ENCODE measurements at regions of chr4 and their contacts with region 1.

Region 1: DNA sequence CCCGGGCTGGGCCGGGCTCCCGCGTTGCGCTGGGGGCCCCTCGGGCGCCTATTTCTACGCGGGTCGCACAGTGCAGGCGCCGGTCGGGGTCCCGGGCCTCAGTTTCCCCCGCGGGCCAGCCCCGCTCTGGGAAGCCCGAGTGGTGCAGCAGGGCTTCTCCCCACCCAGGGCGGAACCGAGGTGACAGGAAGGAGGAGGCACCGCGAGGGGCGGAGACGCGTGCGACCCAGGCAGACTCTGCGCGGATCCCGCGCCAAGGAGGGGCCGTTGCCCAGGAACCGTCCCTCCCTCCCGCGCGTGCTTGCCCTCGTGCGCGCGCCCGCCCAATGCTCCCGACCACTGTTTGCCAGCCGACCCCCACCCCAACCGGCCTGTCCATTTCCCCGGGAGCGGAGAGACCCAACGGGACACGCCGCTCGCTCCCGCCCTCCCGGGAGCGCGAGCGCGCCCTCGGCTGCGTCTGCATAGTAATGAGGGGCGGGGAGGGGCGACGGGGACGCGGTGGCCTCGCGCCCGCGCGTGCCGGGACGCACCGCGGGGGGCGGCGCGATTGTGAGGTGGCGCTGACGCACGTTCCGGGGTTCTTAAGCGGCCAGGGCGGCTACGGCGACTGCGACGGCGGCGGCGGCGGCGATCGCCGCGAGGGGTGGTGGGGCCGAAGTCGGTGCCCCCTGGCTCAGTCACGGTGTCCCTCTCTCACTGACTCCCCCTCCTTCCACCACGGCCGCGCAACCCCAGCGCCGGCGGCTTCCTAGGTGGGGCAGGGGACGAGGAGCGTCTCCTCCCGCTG is at the start of gene CPEB2:
- DNase-seq: peak; percentile 89 to 96
- ATAC-seq: peak; percentile 68 to 87 (median 73)
- H3K4me3 ChIP-seq: peak within 1 kb of the TSS; percentile 87
- H3K4me3 Mint-ChIP-seq: peak within 1 kb of the TSS; percentile 90
- H3K27ac ChIP-seq: peak within 1 kb of the TSS; percentile 98
- H3K27ac Mint-ChIP-seq: peak within 1 kb of the TSS; percentile 91 to 96
- H3K4me1 ChIP-seq: peaks cover 2% of the 10 kb centered on the region
- H3K4me1 Mint-ChIP-seq: peaks cover 26 to 30% of the 10 kb centered on the region in 2 donors
- H3K27me3 ChIP-seq: no peaks in the 10 kb centered on the region
- H3K27me3 Mint-ChIP-seq: peaks cover 0 to 3% of the 10 kb centered on the region in 2 donors
- CTCF ChIP-seq: no peak
- total RNA-seq, gene CPEB2: 24.7 to 32.5 (median 29.0) TPM

Region 2: GRCh38 chr4:13627606-13628301 is 1374.3 kb before region 1 on chr4 and contains the start of gene BOD1L1:
- intact Hi-C with region 1: loop called (anchors 2 kb)
- DNase-seq: peak; percentile 73 to 91
- ATAC-seq: peak; percentile 78 to 86 (median 84)
- H3K4me3 ChIP-seq: peak within 1 kb of the TSS; percentile 74
- H3K4me3 Mint-ChIP-seq: peak within 1 kb of the TSS; percentile 98
- H3K27ac ChIP-seq: peak within 1 kb of the TSS; percentile 78
- H3K27ac Mint-ChIP-seq: peak within 1 kb of the TSS; percentile 97
- H3K4me1 ChIP-seq: peaks cover 18% of the 10 kb centered on the region
- H3K4me1 Mint-ChIP-seq: peaks cover 45 to 48% of the 10 kb centered on the region in 2 donors
- H3K27me3 ChIP-seq: no peaks in the 10 kb centered on the region
- H3K27me3 Mint-ChIP-seq: peaks cover 0 to 2% of the 10 kb centered on the region in 2 donors
- CTCF ChIP-seq: peak; percentile 19
- total RNA-seq, gene BOD1L1: 62.2 to 69.1 (median 67.7) TPM

Region 3: GRCh38 chr4:14871676-14872430 is 130.2 kb before region 1 on chr4:
- intact Hi-C with region 1: loop called (anchors 2 kb)
- DNase-seq: peak in 1 of 2 donors; percentile 54
- ATAC-seq: peak in 2 of 3 donors; percentile 46 to 54
- H3K4me3 ChIP-seq: no peak overlapping the region
- H3K4me3 Mint-ChIP-seq: no peak overlapping the region
- H3K27ac ChIP-seq: no peak overlapping the region
- H3K27ac Mint-ChIP-seq: no peak overlapping the region
- H3K4me1 ChIP-seq: peaks cover 19% of the 10 kb centered on the region
- H3K4me1 Mint-ChIP-seq: peaks cover 39 to 43% of the 10 kb centered on the region in 2 donors
- H3K27me3 ChIP-seq: no peaks in the 10 kb centered on the region
- H3K27me3 Mint-ChIP-seq: no peaks in the 10 kb centered on the region
- CTCF ChIP-seq: peak; percentile 35

Region 4: DNA sequence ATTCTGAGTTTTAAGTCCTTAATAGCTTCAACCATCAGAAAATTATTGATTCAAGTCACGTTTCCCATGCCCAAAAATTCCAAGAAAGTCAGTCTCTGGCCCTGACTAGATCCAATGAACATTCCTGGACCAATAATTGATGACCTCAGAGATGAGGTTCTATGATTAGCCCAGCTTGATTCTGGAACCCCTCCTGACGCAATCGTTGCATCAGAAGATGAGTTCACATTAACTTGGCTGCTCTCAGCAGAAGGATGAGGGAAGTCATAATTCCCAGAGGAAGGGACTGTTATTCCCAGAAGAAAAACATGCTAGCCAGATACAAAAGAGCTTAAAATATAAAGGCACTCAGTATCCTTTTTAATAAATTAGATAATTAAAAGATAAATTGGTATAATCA is 34.1 kb before region 1 on chr4:
- intact Hi-C with region 1: no loop called
- DNase-seq: no peak
- ATAC-seq: no peak
- H3K4me3 ChIP-seq: no peak overlapping the region
- H3K4me3 Mint-ChIP-seq: no peak overlapping the region
- H3K27ac ChIP-seq: no peak overlapping the region
- H3K27ac Mint-ChIP-seq: no peak overlapping the region
- H3K4me1 ChIP-seq: no peaks in the 10 kb centered on the region
- H3K4me1 Mint-ChIP-seq: no peaks in the 10 kb centered on the region
- H3K27me3 ChIP-seq: peaks cover 7% of the 10 kb centered on the region
- H3K27me3 Mint-ChIP-seq: peaks cover 13 to 28% of the 10 kb centered on the region in 2 donors
- CTCF ChIP-seq: no peak

Region 5: DNA sequence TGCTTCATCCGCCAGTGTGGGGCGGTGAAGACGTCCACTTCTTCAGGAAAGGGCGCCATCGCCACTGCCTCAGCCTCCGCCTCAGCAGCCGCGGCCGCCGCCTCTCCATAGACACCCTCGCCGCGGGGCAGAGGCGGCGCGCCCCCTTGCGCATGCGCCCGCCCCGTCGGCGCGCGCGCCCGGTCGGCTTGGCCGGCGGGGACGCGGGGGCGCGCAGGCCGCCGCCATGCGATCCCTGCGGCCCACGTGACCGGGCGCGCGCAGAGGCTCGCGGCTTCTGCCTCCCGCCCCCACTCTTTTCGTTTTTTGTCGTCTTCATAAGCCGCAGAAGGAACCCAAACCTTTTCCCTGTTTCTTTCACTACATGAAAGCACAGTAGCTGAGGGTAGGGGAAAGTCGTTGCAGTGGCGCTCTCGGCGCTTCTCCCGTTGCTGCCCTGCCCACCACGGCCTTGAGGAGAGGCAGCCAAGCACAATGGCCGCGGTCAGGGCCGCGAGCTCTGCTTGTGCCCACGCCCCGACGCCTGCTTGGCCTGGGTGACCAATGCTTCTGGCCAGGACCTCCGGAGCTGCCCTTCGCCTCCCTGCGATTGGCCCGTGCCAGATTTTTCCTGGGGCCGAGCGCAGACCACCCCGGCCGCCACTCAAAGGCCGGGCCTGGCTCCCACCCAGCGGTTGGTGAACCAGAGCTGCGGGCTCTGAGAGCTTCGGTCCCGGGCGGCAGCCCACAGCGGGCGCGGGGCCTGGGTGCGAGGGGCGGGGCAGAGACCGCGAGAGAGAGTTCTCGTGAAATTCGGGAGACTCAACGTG is 653.4 kb after region 1 on chr4 and contains the start of gene FBXL5:
- intact Hi-C with region 1: loop called (anchors 2 kb)
- DNase-seq: peak; percentile 86 to 96
- ATAC-seq: peak; percentile 80 to 94 (median 84)
- H3K4me3 ChIP-seq: peak within 1 kb of the TSS; percentile 74
- H3K4me3 Mint-ChIP-seq: peak within 1 kb of the TSS; percentile 99
- H3K27ac ChIP-seq: peak within 1 kb of the TSS; percentile 96
- H3K27ac Mint-ChIP-seq: peak within 1 kb of the TSS; percentile 94 to 96
- H3K4me1 ChIP-seq: peaks cover 23% of the 10 kb centered on the region
- H3K4me1 Mint-ChIP-seq: peaks cover 42 to 46% of the 10 kb centered on the region in 2 donors
- H3K27me3 ChIP-seq: no peaks in the 10 kb centered on the region
- H3K27me3 Mint-ChIP-seq: no peaks in the 10 kb centered on the region
- CTCF ChIP-seq: no peak
- total RNA-seq, gene FBXL5: 80.2 to 111 (median 92.8) TPM

Region 6: GRCh38 chr4:15963001-15963451 is 961.0 kb after region 1 on chr4 and contains the start of gene FGFBP2:
- intact Hi-C with region 1: loop called (anchors 5 kb)
- DNase-seq: peak; percentile 67 to 83
- ATAC-seq: peak; percentile 51 to 72 (median 65)
- H3K4me3 ChIP-seq: peak within 1 kb of the TSS; percentile 61
- H3K4me3 Mint-ChIP-seq: peak within 1 kb of the TSS; percentile 89
- H3K27ac ChIP-seq: peak within 1 kb of the TSS; percentile 84
- H3K27ac Mint-ChIP-seq: peak within 1 kb of the TSS; percentile 94 to 95
- H3K4me1 ChIP-seq: peaks cover 42% of the 10 kb centered on the region
- H3K4me1 Mint-ChIP-seq: peaks cover 64 to 70% of the 10 kb centered on the region in 2 donors
- H3K27me3 ChIP-seq: no peaks in the 10 kb centered on the region
- H3K27me3 Mint-ChIP-seq: no peaks in the 10 kb centered on the region
- CTCF ChIP-seq: peak; percentile 43
- total RNA-seq, gene FGFBP2: 644 to 736 (median 713) TPM

Measured in natural killer cell (primary cell).